CD8-positive, alpha-beta memory T cell (primary cell): ENCODE measurements at regions of chr1 and their contacts with region 1.

Region 1: GRCh38 chr1:159798893-159799292 is 3.3 kb upstream of the FCRL6 start:
- DNase-seq: peak; percentile 23 to 69 (median 30)
- H3K4me3 ChIP-seq: no peak overlapping the region
- H3K4me3 Mint-ChIP-seq: peak overlapping the region in 2 of 7 donors; percentile 10 to 42
- H3K27ac ChIP-seq: no peak overlapping the region
- H3K27ac Mint-ChIP-seq: peak overlapping the region in 3 of 8 donors; percentile 12 to 44 (median 33)
- H3K4me1 ChIP-seq: peaks cover 29% of the 10 kb centered on the region
- H3K4me1 Mint-ChIP-seq: peaks cover 52 to 55% (median 54%) of the 10 kb centered on the region in 3 donors
- H3K27me3 ChIP-seq: no peaks in the 10 kb centered on the region
- H3K27me3 Mint-ChIP-seq: peaks cover 0 to 1% of the 10 kb centered on the region in 2 donors

Region 2: GRCh38 chr1:159214149-159214760 is 584.6 kb before region 1 on chr1:
- CTCF ChIA-PET with region 1: interaction called, 10 read pairs
- POLR2A ChIA-PET with region 1: no interaction called
- DNase-seq: peak in 3 of 5 donors; percentile 16 to 54 (median 20)
- H3K4me3 ChIP-seq: no peak overlapping the region
- H3K4me3 Mint-ChIP-seq: no peak overlapping the region
- H3K27ac ChIP-seq: no peak overlapping the region
- H3K27ac Mint-ChIP-seq: no peak overlapping the region
- H3K4me1 ChIP-seq: no peaks in the 10 kb centered on the region
- H3K4me1 Mint-ChIP-seq: peaks cover 0 to 2% (median 0%) of the 10 kb centered on the region in 3 donors
- H3K27me3 ChIP-seq: no peaks in the 10 kb centered on the region
- H3K27me3 Mint-ChIP-seq: peaks cover 33 to 73% of the 10 kb centered on the region in 2 donors

Region 3: DNA sequence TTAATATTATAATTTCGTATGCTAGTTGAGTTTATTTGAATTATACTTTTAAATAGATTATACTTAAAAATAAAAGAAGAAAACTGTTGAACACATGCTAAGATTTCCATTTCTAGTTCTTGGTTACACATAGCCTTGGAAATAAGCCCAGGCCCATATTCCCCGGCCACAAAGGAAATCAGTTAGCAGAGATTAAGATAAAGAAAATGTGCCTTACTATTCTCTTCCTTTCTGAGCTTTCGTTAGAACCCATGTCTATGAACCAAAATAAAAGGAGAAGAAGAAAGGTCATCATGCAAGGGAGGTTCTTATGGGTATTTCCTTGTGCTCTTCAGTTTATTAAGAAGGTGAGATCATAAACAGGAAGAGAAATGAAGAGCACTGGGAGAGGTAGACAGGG is 52.2 kb before region 1 on chr1:
- CTCF ChIA-PET with region 1: no interaction called
- POLR2A ChIA-PET with region 1: no interaction called
- DNase-seq: no peak
- H3K4me3 ChIP-seq: no peak overlapping the region
- H3K4me3 Mint-ChIP-seq: no peak overlapping the region
- H3K27ac ChIP-seq: no peak overlapping the region
- H3K27ac Mint-ChIP-seq: no peak overlapping the region
- H3K4me1 ChIP-seq: no peaks in the 10 kb centered on the region
- H3K4me1 Mint-ChIP-seq: no peaks in the 10 kb centered on the region
- H3K27me3 ChIP-seq: no peaks in the 10 kb centered on the region
- H3K27me3 Mint-ChIP-seq: peaks cover 13 to 30% of the 10 kb centered on the region in 2 donors

Region 4: GRCh38 chr1:159821171-159821867 is 22.4 kb after region 1 on chr1:
- CTCF ChIA-PET with region 1: interaction called, 18 read pairs
- POLR2A ChIA-PET with region 1: interaction called, 4 read pairs
- DNase-seq: no peak
- H3K4me3 ChIP-seq: no peak overlapping the region
- H3K4me3 Mint-ChIP-seq: peak overlapping the region in 1 of 7 donors; percentile 10
- H3K27ac ChIP-seq: no peak overlapping the region
- H3K27ac Mint-ChIP-seq: peak overlapping the region in 2 of 8 donors; percentile 14 to 38
- H3K4me1 ChIP-seq: peaks cover 29% of the 10 kb centered on the region
- H3K4me1 Mint-ChIP-seq: peaks cover 45 to 69% (median 65%) of the 10 kb centered on the region in 3 donors
- H3K27me3 ChIP-seq: no peaks in the 10 kb centered on the region
- H3K27me3 Mint-ChIP-seq: peaks cover 0 to 2% of the 10 kb centered on the region in 2 donors

Region 5: GRCh38 chr1:159854116-159854692 is 55.3 kb after region 1 on chr1:
- CTCF ChIA-PET with region 1: interaction called, 12 read pairs
- POLR2A ChIA-PET with region 1: interaction called, 3 read pairs
- DNase-seq: peak in 1 of 5 donors; percentile 7
- H3K4me3 ChIP-seq: peak overlapping the region; percentile 66
- H3K4me3 Mint-ChIP-seq: peak overlapping the region; percentile 64 to 90 (median 80)
- H3K27ac ChIP-seq: peak overlapping the region; percentile 51
- H3K27ac Mint-ChIP-seq: peak overlapping the region; percentile 17 to 95 (median 90)
- H3K4me1 ChIP-seq: peaks cover 13% of the 10 kb centered on the region
- H3K4me1 Mint-ChIP-seq: peaks cover 32 to 69% (median 45%) of the 10 kb centered on the region in 3 donors
- H3K27me3 ChIP-seq: no peaks in the 10 kb centered on the region
- H3K27me3 Mint-ChIP-seq: no peaks in the 10 kb centered on the region

Region 6: DNA sequence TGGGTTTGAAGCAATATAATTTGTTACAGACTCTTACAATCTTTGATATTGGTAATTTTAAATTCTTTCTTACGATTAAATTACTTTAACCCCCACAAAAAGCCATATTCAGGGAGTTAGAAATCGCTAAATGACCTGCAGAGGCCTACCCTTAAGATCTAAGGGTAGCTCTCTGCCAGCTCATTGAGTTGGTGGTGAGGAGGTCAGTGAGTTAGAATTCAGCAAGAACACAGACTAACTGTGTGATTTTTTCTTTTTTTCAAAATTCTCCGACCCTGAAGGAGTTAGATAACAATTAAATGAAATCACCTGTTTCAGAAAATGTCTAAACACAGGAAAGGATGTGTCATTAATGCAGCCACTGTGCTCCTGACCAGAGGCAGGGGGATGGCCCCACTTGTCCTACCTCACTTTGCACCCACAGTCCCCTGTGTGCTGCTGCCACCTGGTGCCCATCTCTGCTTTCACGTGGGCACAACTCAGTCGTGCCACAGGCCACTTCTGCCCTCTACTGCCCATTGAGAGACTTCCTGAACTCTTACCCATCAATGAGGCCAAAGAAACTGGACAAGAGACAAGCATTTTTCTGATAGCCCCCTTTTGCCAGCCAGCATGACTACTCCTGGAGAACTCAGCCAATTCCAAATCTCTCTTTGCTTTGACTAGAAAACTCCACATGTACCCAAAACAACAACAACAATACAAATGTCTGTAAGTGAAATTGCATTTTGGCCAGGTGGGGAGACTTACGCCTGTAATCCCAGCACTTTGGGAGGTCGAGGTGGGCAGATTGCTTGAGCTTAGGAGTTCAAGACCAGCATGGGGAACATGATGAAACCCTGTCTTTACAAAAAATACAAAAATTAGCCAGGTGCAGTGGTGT is 92.6 kb after region 1 on chr1:
- CTCF ChIA-PET with region 1: interaction called, 316 read pairs
- POLR2A ChIA-PET with region 1: interaction called, 7 read pairs
- DNase-seq: peak; percentile 66 to 88 (median 73)
- H3K4me3 ChIP-seq: no peak overlapping the region
- H3K4me3 Mint-ChIP-seq: peak overlapping the region in 1 of 7 donors; percentile 67
- H3K27ac ChIP-seq: no peak overlapping the region
- H3K27ac Mint-ChIP-seq: peak overlapping the region in 4 of 8 donors; percentile 37 to 74 (median 50)
- H3K4me1 ChIP-seq: peaks cover 17% of the 10 kb centered on the region
- H3K4me1 Mint-ChIP-seq: peaks cover 24 to 26% (median 25%) of the 10 kb centered on the region in 3 donors
- H3K27me3 ChIP-seq: no peaks in the 10 kb centered on the region
- H3K27me3 Mint-ChIP-seq: no peaks in the 10 kb centered on the region

Region 7: DNA sequence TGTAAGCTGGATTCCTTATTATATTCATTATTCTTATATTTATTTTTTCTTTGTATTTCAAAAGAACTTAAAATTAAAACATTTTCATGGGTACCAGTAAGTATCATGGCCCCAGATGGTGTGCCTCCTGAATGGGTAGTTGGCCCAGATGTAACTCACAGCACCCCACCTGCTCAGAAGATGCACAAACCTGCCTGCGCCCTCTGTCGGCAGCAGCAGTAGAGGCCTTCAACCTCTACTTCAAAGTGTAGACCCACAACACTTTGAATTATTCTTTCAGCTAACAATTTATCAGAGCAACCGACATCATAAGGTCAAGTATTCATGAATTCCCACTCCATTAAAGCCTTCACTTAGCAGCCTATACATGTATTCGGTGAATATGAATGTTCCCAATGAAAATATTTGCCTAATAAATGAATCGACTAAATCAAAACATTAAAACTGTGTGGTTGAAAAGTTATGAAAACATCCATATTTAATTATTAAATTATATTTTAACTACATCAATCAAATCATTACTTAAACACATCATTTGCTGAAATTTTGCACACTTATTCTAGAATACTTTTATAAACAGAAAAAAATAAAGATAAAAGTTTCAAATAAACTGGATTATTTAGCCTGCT is 207.5 kb after region 1 on chr1:
- CTCF ChIA-PET with region 1: interaction called, 13 read pairs
- POLR2A ChIA-PET with region 1: no interaction called
- DNase-seq: peak; percentile 50 to 81 (median 53)
- H3K4me3 ChIP-seq: no peak overlapping the region
- H3K4me3 Mint-ChIP-seq: no peak overlapping the region
- H3K27ac ChIP-seq: no peak overlapping the region
- H3K27ac Mint-ChIP-seq: no peak overlapping the region
- H3K4me1 ChIP-seq: no peaks in the 10 kb centered on the region
- H3K4me1 Mint-ChIP-seq: no peaks in the 10 kb centered on the region
- H3K27me3 ChIP-seq: no peaks in the 10 kb centered on the region
- H3K27me3 Mint-ChIP-seq: peaks cover 1 to 21% of the 10 kb centered on the region in 2 donors